ENCODE measurements at regions of chr22 and their contacts with region 1.

Region 1: GRCh38 chr22:27850000-27850465 is 48.5 kb upstream of the MN1 start:
- DNase-seq: no peak
- H3K4me3 ChIP-seq: no peak overlapping the region
- H3K27ac ChIP-seq: peak overlapping the region in 2 of 59 donors; percentile 5 to 34
- H3K27me3 ChIP-seq: no peaks in the 10 kb centered on the region
- CTCF ChIP-seq: no peak

Region 2: DNA sequence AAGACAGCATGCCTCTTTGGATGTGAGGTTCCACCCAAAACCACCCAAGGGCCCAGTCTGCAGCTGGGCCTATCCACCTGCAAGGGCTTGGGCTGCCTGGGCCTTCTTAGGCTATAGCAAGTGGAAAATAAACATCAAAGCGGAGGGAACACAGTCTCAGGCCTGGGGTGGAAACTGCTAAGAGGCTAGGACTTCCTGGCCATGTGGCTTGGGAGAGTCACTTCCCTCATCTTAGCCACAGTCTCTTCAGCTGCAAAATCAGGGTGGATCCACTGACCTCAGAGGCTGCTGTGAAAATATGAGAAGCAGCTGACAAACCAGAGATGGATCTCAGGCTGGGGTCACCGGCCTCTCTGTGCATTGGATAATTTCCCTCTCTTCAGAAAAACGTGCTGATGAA is 1307.2 kb before region 1 on chr22:
- intact Hi-C with region 1: loop called in 1 of 2 experiments (anchors 5 kb)
- DNase-seq: no peak
- H3K4me3 ChIP-seq: no peak overlapping the region
- H3K27ac ChIP-seq: peak overlapping the region in 4 of 59 donors; percentile 1 to 48 (median 7)
- H3K27me3 ChIP-seq: no peaks in the 10 kb centered on the region
- CTCF ChIP-seq: no peak

Region 3: GRCh38 chr22:27919222-27919941 is 69.3 kb after region 1 on chr22 and contains the start of gene PITPNB:
- intact Hi-C with region 1: no loop called
- DNase-seq: peak; percentile 84 to 96 (median 93)
- H3K4me3 ChIP-seq: peak within 1 kb of the TSS; percentile 63 to 100 (median 93)
- H3K27ac ChIP-seq: peak within 1 kb of the TSS; percentile 49 to 96 (median 90)
- H3K27me3 ChIP-seq: no peaks in the 10 kb centered on the region
- CTCF ChIP-seq: peak in 16 of 56 donors; percentile 9 to 47 (median 20)
- total RNA-seq, gene PITPNB: 55.3 to 116 (median 83.1) TPM